Activated CD4-positive, alpha-beta memory T cell treated with anti-CD3 and anti-CD28 coated beads for 36 hours (primary cell): ENCODE measurements at regions of chr4 and their contacts with region 1.

Region 1: DNA sequence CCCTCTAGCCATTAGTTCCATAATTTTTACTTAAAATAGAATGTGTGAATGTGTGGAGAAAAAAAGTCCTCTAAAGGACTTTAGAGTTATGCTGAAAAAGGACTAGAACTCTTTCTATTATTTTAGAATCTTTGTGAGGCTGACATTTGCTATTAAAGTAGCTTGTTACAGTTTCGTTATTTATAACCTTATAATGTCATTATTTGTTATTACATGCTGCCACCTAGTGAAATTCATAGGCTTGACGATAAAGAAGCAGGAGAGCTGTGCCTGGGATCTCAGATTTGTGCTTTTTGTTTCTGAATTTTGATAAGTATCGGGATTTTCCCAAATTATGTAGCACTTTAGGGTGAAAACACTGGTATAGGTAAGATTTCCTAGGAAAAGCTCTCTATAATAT is 38.5 kb upstream of the TAPT1 start:
- DNase-seq: no peak
- H3K4me3 Mint-ChIP-seq: no peak overlapping the region
- H3K27ac Mint-ChIP-seq: no peak overlapping the region
- H3K4me1 Mint-ChIP-seq: peaks cover 25% of the 10 kb centered on the region
- H3K27me3 Mint-ChIP-seq: no peaks in the 10 kb centered on the region

Region 2: GRCh38 chr4:15805583-15806517 is 458.9 kb before region 1 on chr4:
- CTCF ChIA-PET with region 1: interaction called, 16 read pairs
- POLR2A ChIA-PET with region 1: no interaction called
- intact Hi-C with region 1: loop called (anchors 10 kb)
- DNase-seq: peak; percentile 43
- H3K4me3 Mint-ChIP-seq: no peak overlapping the region
- H3K27ac Mint-ChIP-seq: no peak overlapping the region
- H3K4me1 Mint-ChIP-seq: peaks cover 12% of the 10 kb centered on the region
- H3K27me3 Mint-ChIP-seq: no peaks in the 10 kb centered on the region

Region 3: GRCh38 chr4:15963001-15963451 is 301.8 kb before region 1 on chr4 and contains the start of gene FGFBP2:
- CTCF ChIA-PET with region 1: interaction called, 9 read pairs
- POLR2A ChIA-PET with region 1: no interaction called
- intact Hi-C with region 1: loop called (anchors 2 kb)
- DNase-seq: peak; percentile 71
- H3K4me3 Mint-ChIP-seq: no peak within 1 kb of the TSS
- H3K27ac Mint-ChIP-seq: no peak within 1 kb of the TSS
- H3K4me1 Mint-ChIP-seq: peaks cover 8% of the 10 kb centered on the region
- H3K27me3 Mint-ChIP-seq: peaks cover 4% of the 10 kb centered on the region
- total RNA-seq, gene FGFBP2: 0.43 to 0.51 TPM

Region 4: DNA sequence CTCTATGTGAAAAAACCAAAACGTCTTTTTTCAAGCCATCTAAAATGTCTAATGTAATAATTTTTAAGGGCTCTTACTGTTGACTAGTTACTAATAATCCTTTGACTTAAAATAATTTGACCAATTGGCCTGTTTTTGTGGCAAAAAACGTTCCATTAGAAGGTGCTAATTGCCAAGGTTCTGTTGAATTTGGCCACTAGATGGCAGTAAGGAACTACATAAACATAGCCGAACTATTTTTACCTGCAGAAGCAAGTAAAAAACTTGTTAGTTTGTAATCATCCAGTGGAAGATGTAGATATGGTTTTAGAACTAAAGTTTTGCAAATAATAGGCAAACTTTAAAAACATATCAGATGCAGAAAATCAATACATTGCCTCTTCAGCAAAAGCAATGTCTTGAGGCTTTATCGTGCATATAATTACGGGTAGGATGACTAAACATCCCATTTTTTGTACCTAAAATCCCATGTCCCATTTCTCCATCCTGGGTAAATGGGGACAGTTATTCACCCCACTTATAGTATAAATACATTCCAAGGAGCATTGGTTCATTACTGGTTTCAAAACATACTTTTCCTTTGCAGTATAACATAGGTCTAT is 238.5 kb before region 1 on chr4:
- CTCF ChIA-PET with region 1: interaction called, 80 read pairs
- POLR2A ChIA-PET with region 1: no interaction called
- intact Hi-C with region 1: loop called (anchors 1 kb)
- DNase-seq: no peak
- H3K4me3 Mint-ChIP-seq: no peak overlapping the region
- H3K27ac Mint-ChIP-seq: no peak overlapping the region
- H3K4me1 Mint-ChIP-seq: peaks cover 10% of the 10 kb centered on the region
- H3K27me3 Mint-ChIP-seq: peaks cover 31% of the 10 kb centered on the region

Region 5: DNA sequence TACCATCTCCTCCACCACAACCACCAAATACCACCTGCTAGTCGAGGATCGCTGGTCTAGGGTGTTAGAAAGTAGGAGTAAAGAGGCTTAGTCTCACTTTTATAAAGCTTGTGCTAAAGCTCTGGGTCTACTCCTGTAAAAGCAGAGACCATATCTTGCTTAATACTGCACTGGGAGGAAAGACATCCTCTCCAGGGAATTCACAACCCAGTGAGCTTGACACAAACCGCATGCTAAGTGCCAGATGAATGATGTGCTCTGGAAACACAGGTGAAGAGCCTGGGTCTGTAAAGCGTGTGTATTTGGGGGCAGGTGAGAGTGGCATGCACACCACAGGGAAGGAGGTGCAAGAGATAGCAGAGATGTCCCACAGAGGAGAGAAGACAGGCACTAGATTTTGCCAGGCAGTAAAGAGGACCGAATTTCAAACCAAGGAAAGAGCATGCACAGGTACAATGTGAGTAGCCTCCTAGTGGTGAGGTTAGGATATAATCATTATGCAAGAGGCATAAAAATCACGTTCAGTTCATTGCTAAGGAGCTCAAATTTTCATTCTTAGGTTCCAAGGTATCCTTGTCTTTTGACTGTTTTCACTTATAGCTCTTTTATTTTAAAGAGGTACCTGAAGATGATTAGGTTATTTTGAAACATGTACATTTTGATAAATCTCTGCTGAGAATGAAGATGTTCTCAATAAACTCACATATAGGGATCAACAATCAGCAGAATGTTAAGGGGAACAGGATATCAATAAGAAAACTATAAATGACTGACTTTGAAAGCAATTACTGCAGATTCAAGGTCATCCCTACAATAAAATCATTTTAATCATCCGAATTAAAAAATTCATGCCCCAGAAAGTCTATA is 59.3 kb before region 1 on chr4:
- CTCF ChIA-PET with region 1: interaction called, 15 read pairs
- POLR2A ChIA-PET with region 1: no interaction called
- intact Hi-C with region 1: loop called (anchors 2 kb)
- DNase-seq: no peak
- H3K4me3 Mint-ChIP-seq: no peak overlapping the region
- H3K27ac Mint-ChIP-seq: no peak overlapping the region
- H3K4me1 Mint-ChIP-seq: peaks cover 37% of the 10 kb centered on the region
- H3K27me3 Mint-ChIP-seq: no peaks in the 10 kb centered on the region

Region 6: GRCh38 chr4:16225863-16226815 is 38.7 kb before region 1 on chr4 and contains the start of gene TAPT1:
- CTCF ChIA-PET with region 1: interaction called, 6 read pairs
- POLR2A ChIA-PET with region 1: interaction called, 7 read pairs
- intact Hi-C with region 1: loop called (anchors 2 kb)
- DNase-seq: peak; percentile 87
- H3K4me3 Mint-ChIP-seq: peak within 1 kb of the TSS; percentile 94
- H3K27ac Mint-ChIP-seq: peak within 1 kb of the TSS; percentile 96
- H3K4me1 Mint-ChIP-seq: peaks cover 60% of the 10 kb centered on the region
- H3K27me3 Mint-ChIP-seq: no peaks in the 10 kb centered on the region
- total RNA-seq, gene TAPT1: 35.6 TPM

Region 7: DNA sequence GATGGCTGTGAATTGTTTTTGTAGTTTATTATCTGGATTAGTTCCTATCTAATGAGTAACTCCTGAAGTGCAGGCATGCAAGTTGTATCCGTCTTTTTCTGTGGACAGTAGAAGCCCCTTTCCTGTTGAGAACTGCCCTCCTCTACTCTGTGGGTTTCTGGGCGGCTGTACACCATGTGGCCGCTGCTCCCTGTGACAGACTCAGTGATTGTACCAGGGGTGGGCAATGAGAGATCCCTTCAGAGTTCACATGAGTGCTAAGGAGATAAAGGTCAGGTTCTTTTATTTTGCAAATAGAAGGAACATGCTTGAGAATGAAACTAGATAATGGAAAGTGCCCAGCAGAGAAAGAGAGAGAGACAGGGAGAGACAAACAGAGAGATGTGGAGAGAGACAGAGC is 37.8 kb after region 1 on chr4:
- CTCF ChIA-PET with region 1: no interaction called
- POLR2A ChIA-PET with region 1: no interaction called
- intact Hi-C with region 1: no loop called
- DNase-seq: no peak
- H3K4me3 Mint-ChIP-seq: no peak overlapping the region
- H3K27ac Mint-ChIP-seq: no peak overlapping the region
- H3K4me1 Mint-ChIP-seq: no peaks in the 10 kb centered on the region
- H3K27me3 Mint-ChIP-seq: peaks cover 7% of the 10 kb centered on the region